Dendritic cell treated with granulocyte-macrophage colony-stimulating factor and Interleukin-4, amounts not matched to agents 40 ng/mL and 50 ng/mL, for 4 days (primary cell): ENCODE measurements at regions of chr17 and their contacts with region 1.

Region 1: GRCh38 chr17:74601944-74602572 is 10.0 kb upstream of the CD300LD start:
- H3K4me3 Mint-ChIP-seq: no peak overlapping the region
- H3K27ac Mint-ChIP-seq: peak overlapping the region; percentile 64
- H3K4me1 Mint-ChIP-seq: peaks cover 94% of the 10 kb centered on the region
- H3K27me3 Mint-ChIP-seq: peaks cover 20% of the 10 kb centered on the region

Region 2: GRCh38 chr17:74379495-74380085 is 222.5 kb before region 1 on chr17:
- intact Hi-C with region 1: loop called (anchors 10 kb)
- H3K4me3 Mint-ChIP-seq: no peak overlapping the region
- H3K27ac Mint-ChIP-seq: no peak overlapping the region
- H3K4me1 Mint-ChIP-seq: peaks cover 12% of the 10 kb centered on the region
- H3K27me3 Mint-ChIP-seq: peaks cover 33% of the 10 kb centered on the region

Region 3: GRCh38 chr17:74545843-74546230 is 56.2 kb before region 1 on chr17 and contains the start of gene CD300C:
- intact Hi-C with region 1: loop called (anchors 10 kb)
- H3K4me3 Mint-ChIP-seq: peak within 1 kb of the TSS; percentile 69
- H3K27ac Mint-ChIP-seq: peak within 1 kb of the TSS; percentile 93
- H3K4me1 Mint-ChIP-seq: peaks cover 82% of the 10 kb centered on the region
- H3K27me3 Mint-ChIP-seq: peaks cover 13% of the 10 kb centered on the region

Region 4: DNA sequence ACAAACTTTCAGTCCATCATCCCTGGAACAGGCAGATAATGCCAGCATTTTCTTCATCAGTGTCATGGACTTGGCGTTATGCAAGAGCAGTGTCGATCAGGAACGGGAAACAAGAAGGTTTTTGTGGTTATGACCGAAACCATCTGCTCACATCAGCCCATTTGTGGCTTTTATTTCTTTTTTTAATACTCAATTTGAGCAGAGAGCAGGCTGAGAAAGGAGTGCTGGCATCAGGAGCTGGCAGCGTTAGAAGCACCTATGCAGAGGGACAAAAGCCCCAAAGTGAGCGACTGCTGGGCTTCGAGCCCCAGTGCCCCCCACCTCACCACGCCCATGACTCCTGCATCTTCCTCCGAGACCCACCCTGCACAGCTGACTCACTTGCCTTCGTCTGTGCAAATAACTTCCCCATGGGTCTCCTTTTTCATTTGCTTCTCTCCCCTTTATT is 37.7 kb after region 1 on chr17:
- intact Hi-C with region 1: loop called (anchors 5 kb)
- H3K4me3 Mint-ChIP-seq: peak overlapping the region; percentile 45
- H3K27ac Mint-ChIP-seq: peak overlapping the region; percentile 77
- H3K4me1 Mint-ChIP-seq: peaks cover 96% of the 10 kb centered on the region
- H3K27me3 Mint-ChIP-seq: peaks cover 48% of the 10 kb centered on the region

Region 5: GRCh38 chr17:75313941-75314551 is 712.0 kb after region 1 on chr17:
- intact Hi-C with region 1: no loop called
- H3K4me3 Mint-ChIP-seq: peak overlapping the region; percentile 55
- H3K27ac Mint-ChIP-seq: peak overlapping the region; percentile 92
- H3K4me1 Mint-ChIP-seq: peaks cover 83% of the 10 kb centered on the region
- H3K27me3 Mint-ChIP-seq: no peaks in the 10 kb centered on the region